ENCODE measurements at regions of chr3 and their contacts with region 1.

Region 1: DNA sequence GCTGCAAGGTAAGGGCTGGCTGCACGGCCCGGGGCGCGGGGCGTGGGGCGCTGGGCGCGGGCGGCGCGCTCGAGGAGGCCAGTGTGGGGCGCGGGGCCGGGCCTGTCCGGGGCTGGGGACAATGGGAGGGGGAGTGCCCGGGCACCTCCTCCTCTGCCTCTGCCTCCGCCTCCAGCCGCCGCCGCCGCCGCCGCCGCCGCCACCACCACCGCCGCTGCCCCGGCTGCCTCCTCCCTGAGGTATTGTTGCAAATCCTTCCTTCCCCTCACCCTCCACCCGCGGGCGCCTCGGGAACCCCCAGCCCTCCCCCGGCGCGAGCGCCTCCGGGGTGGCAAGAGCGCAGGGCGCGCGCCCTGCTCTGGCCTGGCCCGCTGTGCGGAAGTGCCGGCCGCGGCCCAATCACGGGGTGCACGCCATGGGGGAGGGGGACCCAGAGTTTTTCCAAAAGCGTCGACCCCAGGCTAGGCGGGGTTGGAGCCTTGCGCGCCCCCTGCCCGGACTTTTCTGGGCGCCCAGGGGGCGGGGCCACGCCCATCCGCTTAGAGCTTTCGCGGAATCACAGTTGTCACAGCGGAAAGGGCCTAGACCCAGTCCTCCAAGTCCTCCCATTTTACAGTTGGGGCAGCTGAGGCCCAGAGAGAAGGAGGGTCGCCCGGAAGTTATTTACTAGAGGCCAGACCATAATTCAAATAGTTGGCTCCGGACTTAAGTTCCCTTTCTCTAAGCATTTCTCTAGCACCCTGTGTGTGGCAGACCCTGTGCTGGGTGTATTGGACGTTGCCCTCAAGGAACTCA is at the start of gene LPP:
- DNase-seq: peak; percentile 88
- ATAC-seq: peak; percentile 89
- H3K4me3 Mint-ChIP-seq: peak within 1 kb of the TSS; percentile 96
- H3K27ac Mint-ChIP-seq: peak within 1 kb of the TSS; percentile 92
- H3K4me1 Mint-ChIP-seq: peaks cover 51% of the 10 kb centered on the region
- H3K27me3 Mint-ChIP-seq: no peaks in the 10 kb centered on the region
- CTCF ChIP-seq: no peak
- total RNA-seq, gene LPP: 49.5 and 60.1 TPM in 2 replicates

Region 2: DNA sequence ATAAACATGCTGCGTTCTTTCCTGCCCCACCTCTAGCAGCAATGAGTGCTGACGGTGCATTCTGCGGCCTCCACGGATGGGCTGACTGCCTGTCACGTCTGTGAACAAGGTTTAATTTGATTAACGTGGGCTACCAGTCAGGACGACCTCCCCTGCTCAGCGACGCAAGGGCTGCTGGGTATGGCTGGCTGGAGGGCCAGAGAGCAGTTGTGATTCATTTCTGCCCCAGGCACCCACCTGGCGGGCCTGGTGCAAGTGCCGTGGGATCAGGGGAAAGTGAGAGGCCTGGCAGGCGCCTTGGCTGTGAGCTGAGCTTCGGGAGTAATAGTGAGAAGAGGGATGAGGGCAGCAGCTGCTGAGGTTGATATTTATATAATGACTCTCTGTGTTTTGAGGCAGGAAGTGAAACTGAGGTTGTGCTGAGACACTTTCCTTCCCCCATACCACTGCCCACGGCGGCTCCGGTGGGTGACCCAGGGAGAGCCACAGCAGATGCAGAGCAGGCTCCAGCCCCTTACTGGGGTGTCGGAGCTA is 218.5 kb before region 1 on chr3:
- CTCF ChIA-PET with region 1: no interaction called
- POLR2A ChIA-PET with region 1: no interaction called
- intact Hi-C with region 1: loop called (anchors 5 kb)
- DNase-seq: peak; percentile 61
- ATAC-seq: peak; percentile 91
- H3K4me3 Mint-ChIP-seq: peak overlapping the region; percentile 77
- H3K27ac Mint-ChIP-seq: peak overlapping the region; percentile 90
- H3K4me1 Mint-ChIP-seq: peaks cover 31% of the 10 kb centered on the region
- H3K27me3 Mint-ChIP-seq: peaks cover 33% of the 10 kb centered on the region
- CTCF ChIP-seq: no peak

Region 3: DNA sequence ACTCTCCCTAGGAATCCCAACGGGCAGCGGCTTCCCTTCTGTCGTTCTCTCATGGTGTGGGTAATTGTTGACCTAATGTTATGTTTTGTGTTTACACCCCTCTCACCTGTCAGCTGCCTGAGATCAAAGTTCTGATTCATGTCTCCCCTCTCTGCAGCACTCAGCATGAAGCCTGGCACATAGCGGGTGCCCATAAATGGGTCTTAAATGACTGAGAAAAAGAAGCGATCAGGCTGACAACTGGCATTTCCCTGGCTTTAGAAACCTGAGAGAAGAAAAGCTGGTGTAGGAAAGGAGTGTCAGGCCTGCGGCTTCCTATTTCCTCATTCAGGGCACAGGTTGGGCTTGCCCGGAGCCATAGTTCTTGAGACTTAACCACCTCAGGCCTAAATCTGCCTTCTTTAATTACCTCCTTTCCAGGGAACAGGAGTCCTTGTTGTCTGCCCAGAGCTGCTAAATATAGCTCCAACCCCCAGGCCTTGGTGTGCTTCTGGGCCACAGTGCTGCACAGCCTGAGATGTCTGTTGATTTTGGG is 31.6 kb after region 1 on chr3:
- CTCF ChIA-PET with region 1: no interaction called
- POLR2A ChIA-PET with region 1: interaction called, 14 read pairs
- intact Hi-C with region 1: loop called (anchors 2 kb)
- DNase-seq: no peak
- ATAC-seq: peak; percentile 47
- H3K4me3 Mint-ChIP-seq: peak overlapping the region; percentile 20
- H3K27ac Mint-ChIP-seq: peak overlapping the region; percentile 80
- H3K4me1 Mint-ChIP-seq: peaks cover 35% of the 10 kb centered on the region
- H3K27me3 Mint-ChIP-seq: no peaks in the 10 kb centered on the region
- CTCF ChIP-seq: no peak

Region 4: GRCh38 chr3:188294823-188295487 is 140.7 kb after region 1 on chr3:
- CTCF ChIA-PET with region 1: no interaction called
- POLR2A ChIA-PET with region 1: interaction called, 7 read pairs
- intact Hi-C with region 1: loop called (anchors 5 kb)
- DNase-seq: no peak
- ATAC-seq: no peak
- H3K4me3 Mint-ChIP-seq: peak overlapping the region; percentile 17
- H3K27ac Mint-ChIP-seq: peak overlapping the region; percentile 25
- H3K4me1 Mint-ChIP-seq: peaks cover 85% of the 10 kb centered on the region
- H3K27me3 Mint-ChIP-seq: no peaks in the 10 kb centered on the region
- CTCF ChIP-seq: no peak

Region 5: GRCh38 chr3:188497021-188497420 is 342.8 kb after region 1 on chr3:
- CTCF ChIA-PET with region 1: no interaction called
- POLR2A ChIA-PET with region 1: no interaction called
- intact Hi-C with region 1: no loop called
- DNase-seq: no peak
- ATAC-seq: no peak
- H3K4me3 Mint-ChIP-seq: no peak overlapping the region
- H3K27ac Mint-ChIP-seq: no peak overlapping the region
- H3K4me1 Mint-ChIP-seq: peaks cover 31% of the 10 kb centered on the region
- H3K27me3 Mint-ChIP-seq: no peaks in the 10 kb centered on the region
- CTCF ChIP-seq: no peak

Region 6: GRCh38 chr3:188749010-188749617 is 594.9 kb after region 1 on chr3:
- CTCF ChIA-PET with region 1: interaction called, 3 read pairs
- POLR2A ChIA-PET with region 1: no interaction called
- intact Hi-C with region 1: loop called (anchors 2 kb)
- DNase-seq: no peak
- ATAC-seq: no peak
- H3K4me3 Mint-ChIP-seq: no peak overlapping the region
- H3K27ac Mint-ChIP-seq: peak overlapping the region; percentile 55
- H3K4me1 Mint-ChIP-seq: peaks cover 43% of the 10 kb centered on the region
- H3K27me3 Mint-ChIP-seq: no peaks in the 10 kb centered on the region
- CTCF ChIP-seq: no peak